ENCODE measurements at regions of chr17 and their contacts with region 1.

Region 1: DNA sequence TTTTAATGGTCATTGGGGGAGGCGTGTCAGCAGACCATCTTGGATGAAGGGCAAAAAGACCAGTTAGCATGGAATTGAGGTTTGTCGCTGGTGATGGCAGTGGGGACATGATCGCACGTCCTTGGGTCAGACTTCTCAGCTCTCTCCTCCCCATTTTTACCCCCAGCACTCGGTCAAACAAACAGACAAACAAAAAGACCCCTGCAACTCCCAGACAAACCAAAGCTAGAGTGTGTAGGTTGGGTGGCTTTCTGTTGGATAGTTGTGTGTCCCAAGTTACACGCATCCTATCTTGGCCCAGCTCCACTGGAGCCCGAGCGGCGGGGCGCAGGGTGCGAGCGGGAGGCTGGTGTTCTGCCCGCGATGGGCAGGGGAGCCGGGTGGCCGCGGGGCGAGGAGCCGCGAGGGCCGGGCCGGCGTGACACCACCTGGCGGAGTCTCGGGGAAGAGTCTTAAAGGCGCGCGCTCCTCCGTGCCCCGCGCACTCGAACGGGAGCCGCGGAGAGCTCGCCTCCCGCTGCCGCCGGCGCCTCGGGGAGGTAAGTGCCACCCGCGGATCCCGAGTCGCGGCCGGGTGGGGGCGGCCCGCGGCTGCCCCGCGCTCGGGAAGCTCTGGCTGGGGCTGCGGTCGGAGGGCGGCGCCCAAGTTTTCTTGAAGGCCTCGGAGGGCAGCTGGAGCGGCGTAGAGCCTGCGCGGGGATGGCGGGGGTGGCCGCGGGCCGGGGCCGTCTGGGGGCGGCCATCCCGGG is 18.5 kb upstream of the NTN1 start:
- DNase-seq: peak in 1 of 2 donors; percentile 27
- ATAC-seq: peak in 2 of 4 donors; percentile 28 to 40
- H3K4me3 ChIP-seq: peak overlapping the region; percentile 56
- H3K27ac ChIP-seq: no peak overlapping the region
- H3K4me1 ChIP-seq: no peaks in the 10 kb centered on the region
- H3K27me3 ChIP-seq: peaks cover 0 to 71% (median 21%) of the 10 kb centered on the region in 3 donors
- CTCF ChIP-seq: no peak

Region 2: DNA sequence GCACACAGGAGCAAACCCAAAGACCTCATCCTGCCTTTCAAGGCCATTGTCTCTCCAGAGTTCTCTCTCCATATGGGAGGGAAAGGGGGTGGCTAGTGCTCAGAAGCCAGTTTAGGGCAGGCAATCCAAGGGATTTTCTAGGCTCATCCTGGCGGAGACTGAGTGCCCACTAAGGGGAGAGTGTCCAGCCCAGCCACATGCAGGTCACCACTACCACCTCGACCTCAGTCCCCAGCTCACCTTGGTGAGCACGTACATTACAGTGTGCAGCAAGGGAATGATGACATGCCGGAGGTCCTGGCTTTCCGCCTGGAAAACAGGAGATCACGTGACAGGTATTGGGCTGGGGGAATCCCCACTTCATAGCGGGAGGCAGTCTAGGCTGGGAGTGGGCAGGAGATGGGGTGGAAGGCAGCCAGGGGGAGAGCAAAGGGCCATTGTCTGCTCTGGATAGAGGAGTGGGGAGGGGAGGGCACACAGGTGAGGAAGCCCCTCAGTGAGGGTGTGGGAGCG is 165.2 kb before region 1 on chr17:
- intact Hi-C with region 1: no loop called
- DNase-seq: no peak
- ATAC-seq: no peak
- H3K4me3 ChIP-seq: no peak overlapping the region
- H3K27ac ChIP-seq: no peak overlapping the region
- H3K4me1 ChIP-seq: no peaks in the 10 kb centered on the region
- H3K27me3 ChIP-seq: peaks cover 0 to 3% (median 0%) of the 10 kb centered on the region in 3 donors
- CTCF ChIP-seq: no peak

Region 3: GRCh38 chr17:8955021-8955959 is 47.5 kb before region 1 on chr17:
- intact Hi-C with region 1: no loop called
- DNase-seq: no peak
- ATAC-seq: no peak
- H3K4me3 ChIP-seq: no peak overlapping the region
- H3K27ac ChIP-seq: no peak overlapping the region
- H3K4me1 ChIP-seq: no peaks in the 10 kb centered on the region
- H3K27me3 ChIP-seq: peaks cover 0 to 9% (median 2%) of the 10 kb centered on the region in 3 donors
- CTCF ChIP-seq: no peak

Region 4: DNA sequence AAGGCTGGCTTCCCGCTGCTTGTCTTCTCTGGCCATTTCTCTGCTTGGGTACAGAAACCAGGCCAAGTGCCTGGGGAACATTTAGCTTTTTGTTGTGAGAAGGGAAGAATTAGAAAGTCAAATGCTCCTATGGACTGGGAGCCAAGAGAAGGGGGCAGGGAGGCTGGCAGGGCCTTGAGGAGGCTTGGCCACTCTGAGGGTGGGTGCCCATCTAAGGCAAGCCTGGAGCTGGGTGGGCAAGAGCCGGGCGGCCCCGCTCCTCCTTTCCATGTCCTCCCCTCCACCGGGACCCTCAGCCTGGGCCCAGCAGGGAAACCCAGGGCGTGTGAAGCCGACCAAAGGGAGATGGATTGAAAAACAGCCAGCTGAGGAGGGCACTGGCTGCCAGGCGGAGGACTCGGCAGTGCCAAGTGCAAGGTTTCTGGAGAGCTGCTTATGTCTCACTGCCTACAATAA is 87.9 kb after region 1 on chr17:
- intact Hi-C with region 1: no loop called
- DNase-seq: no peak
- ATAC-seq: no peak
- H3K4me3 ChIP-seq: no peak overlapping the region
- H3K27ac ChIP-seq: no peak overlapping the region
- H3K4me1 ChIP-seq: no peaks in the 10 kb centered on the region
- H3K27me3 ChIP-seq: peaks cover 0 to 3% (median 2%) of the 10 kb centered on the region in 3 donors
- CTCF ChIP-seq: no peak

Region 5: GRCh38 chr17:9120471-9120870 is 117.7 kb after region 1 on chr17:
- intact Hi-C with region 1: no loop called
- DNase-seq: no peak
- ATAC-seq: no peak
- H3K4me3 ChIP-seq: no peak overlapping the region
- H3K27ac ChIP-seq: no peak overlapping the region
- H3K4me1 ChIP-seq: no peaks in the 10 kb centered on the region
- H3K27me3 ChIP-seq: peaks cover 0 to 9% (median 6%) of the 10 kb centered on the region in 3 donors
- CTCF ChIP-seq: no peak

Region 6: DNA sequence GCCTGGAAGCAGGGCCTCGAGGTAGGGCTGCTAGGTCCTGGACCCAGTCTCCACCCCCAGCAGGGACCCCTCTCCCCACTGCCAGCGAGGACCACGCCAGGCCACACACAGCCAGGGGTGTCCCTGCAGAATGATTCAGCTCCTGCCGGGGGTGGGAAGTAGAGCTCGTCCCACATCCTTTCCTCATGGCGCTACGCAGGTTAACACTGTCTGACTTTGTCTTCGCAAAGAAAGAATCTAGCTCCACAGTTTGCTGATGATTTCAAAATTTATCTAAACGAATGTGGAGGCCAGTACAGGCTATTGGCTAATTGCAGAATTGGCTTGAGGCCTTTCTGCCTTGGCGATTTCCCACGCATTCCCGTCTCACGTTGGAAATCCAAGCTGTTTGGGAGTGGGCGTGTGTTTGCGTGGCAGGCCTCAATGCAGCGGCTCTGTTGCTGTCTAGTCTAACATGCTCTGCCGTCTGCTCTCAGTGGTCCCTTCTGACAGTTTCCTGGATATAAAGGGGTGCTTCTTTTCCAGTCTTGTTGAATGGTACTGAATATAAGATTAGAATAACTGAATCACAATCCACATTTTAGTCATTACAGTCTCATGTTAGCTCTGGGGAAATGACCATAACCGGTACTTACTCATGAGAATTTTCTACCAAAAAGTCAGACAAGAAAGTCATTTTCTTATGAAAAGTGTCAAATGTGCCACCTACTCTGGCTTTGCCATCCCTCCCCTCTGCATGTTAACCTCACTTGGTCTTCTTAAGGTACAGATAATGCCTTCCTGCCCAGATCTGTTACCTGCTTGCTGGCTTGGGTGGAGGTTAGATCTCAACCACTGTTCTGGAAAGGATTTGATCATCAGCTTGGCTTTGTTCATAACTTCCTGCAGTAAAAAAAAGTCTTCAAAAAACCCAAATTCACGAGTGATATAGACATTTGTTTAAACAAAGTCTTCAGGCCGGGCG is 270.9 kb after region 1 on chr17:
- intact Hi-C with region 1: loop called in 1 of 2 experiments (anchors 10 kb)
- DNase-seq: peak in 1 of 2 donors; percentile 35
- ATAC-seq: peak in 1 of 4 donors; percentile 48
- H3K4me3 ChIP-seq: no peak overlapping the region
- H3K27ac ChIP-seq: no peak overlapping the region
- H3K4me1 ChIP-seq: no peaks in the 10 kb centered on the region
- H3K27me3 ChIP-seq: no peaks in the 10 kb centered on the region
- CTCF ChIP-seq: no peak